Activated naive CD8-positive, alpha-beta T cell treated with anti-CD3 and anti-CD28 coated beads, Interleukin-2, amount 10 ng/mL, durations not matched to agents 7 days and 5 days (primary cell): ENCODE measurements at regions of chr14 and their contacts with region 1.

Region 1: GRCh38 chr14:54773171-54773975 is 129.3 kb downstream of the GCH1 start:
- DNase-seq: peak; percentile 77
- ATAC-seq: peak; percentile 87
- H3K4me3 Mint-ChIP-seq: peak overlapping the region; percentile 67
- H3K27ac Mint-ChIP-seq: peak overlapping the region; percentile 87
- H3K4me1 Mint-ChIP-seq: peaks cover 49% of the 10 kb centered on the region
- H3K27me3 Mint-ChIP-seq: peaks cover 9% of the 10 kb centered on the region

Region 2: GRCh38 chr14:54566410-54567223 is 206.8 kb before region 1 on chr14 and contains the start of gene SAMD4A:
- POLR2A ChIA-PET with region 1: interaction called, 75 read pairs
- DNase-seq: peak; percentile 72
- ATAC-seq: peak; percentile 35
- H3K4me3 Mint-ChIP-seq: peak within 1 kb of the TSS; percentile 98
- H3K27ac Mint-ChIP-seq: peak within 1 kb of the TSS; percentile 89
- H3K4me1 Mint-ChIP-seq: peaks cover 11% of the 10 kb centered on the region
- H3K27me3 Mint-ChIP-seq: peaks cover 33% of the 10 kb centered on the region
- total RNA-seq, gene SAMD4A: 2.6 to 2.7 TPM

Region 3: DNA sequence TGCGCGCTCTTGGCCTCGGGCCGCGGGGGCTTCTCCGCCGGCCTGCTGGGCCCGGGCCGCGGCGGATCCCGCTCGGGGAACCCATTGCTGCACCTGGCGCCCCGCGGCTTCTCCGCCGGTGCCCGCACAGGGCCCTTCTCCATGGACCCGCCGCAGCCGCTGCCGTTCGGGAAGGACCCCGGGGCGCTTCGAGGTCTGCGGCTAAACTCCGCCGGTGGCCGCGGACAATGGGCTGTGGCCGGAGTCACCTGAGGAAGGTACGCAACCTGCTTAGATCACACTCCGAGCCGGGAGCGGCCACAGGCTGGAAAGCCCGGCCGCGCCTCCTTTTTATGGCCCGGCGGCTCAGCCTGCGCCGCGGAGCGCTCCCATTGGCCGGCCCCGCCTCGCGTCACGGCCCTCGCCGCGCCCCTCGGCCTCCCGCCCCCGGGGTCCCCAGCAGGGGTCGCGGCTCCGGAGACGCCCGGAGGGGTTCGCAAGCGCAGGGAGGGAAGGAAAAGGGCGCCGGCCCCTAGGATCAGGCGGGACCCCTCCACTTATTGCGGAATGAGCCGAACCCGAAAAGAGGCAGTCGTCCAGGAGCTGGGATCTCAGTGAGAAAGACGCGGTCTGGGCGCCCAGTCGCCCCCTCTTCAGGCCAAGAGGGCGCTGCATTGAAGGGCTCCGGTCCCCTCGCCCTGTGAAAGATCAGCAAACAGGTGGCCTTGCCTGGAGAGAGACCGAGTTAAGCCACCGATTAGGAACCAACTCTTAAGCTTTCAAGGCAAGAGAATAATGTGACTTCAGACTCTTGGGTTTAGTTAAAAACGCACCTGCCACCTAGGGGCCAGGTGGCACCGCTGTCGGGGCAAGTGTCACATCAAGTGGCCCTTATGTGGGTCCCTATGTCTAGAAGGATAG is 129.4 kb after region 1 on chr14 and contains the start of gene GCH1:
- POLR2A ChIA-PET with region 1: interaction called, 11 read pairs
- DNase-seq: peak; percentile 88
- ATAC-seq: peak; percentile 73
- H3K4me3 Mint-ChIP-seq: peak within 1 kb of the TSS; percentile 92
- H3K27ac Mint-ChIP-seq: peak within 1 kb of the TSS; percentile 89
- H3K4me1 Mint-ChIP-seq: peaks cover 33% of the 10 kb centered on the region
- H3K27me3 Mint-ChIP-seq: no peaks in the 10 kb centered on the region
- total RNA-seq, gene GCH1: 46.4 to 47.3 TPM

Region 4: GRCh38 chr14:54942913-54943312 is 169.5 kb after region 1 on chr14:
- POLR2A ChIA-PET with region 1: no interaction called
- DNase-seq: no peak
- ATAC-seq: no peak
- H3K4me3 Mint-ChIP-seq: no peak overlapping the region
- H3K27ac Mint-ChIP-seq: no peak overlapping the region
- H3K4me1 Mint-ChIP-seq: peaks cover 3% of the 10 kb centered on the region
- H3K27me3 Mint-ChIP-seq: no peaks in the 10 kb centered on the region